ENCODE measurements at regions of chr1 and their contacts with region 1.

Region 1: DNA sequence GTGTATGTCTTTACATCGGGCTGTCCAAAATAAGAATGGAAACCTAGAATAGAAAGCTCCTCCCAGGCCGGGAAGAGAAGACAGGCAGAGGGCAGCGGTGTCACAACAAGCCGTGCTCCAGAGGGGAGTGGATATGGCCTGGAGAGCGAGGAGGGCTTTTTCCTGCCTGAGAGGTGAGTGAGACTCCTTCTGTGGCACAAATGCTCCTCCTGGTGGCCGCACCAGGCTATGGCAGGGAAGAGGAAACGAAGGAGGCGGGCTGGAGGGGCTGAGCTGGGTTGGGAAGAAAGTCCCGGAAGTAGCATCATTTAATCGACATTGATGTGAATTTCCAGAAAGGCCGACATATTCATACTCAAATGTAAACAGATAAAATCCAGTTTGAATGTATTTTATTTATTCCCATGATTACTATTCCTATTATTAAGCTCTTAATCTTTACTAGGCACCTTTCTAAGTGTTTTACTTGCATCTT is 54.7 kb downstream of the MEF2D start:
- DNase-seq: peak; percentile 72
- CTCF ChIP-seq: peak; percentile 98

Region 2: GRCh38 chr1:156096640-156097391 is 349.0 kb before region 1 on chr1:
- CTCF ChIA-PET with region 1: interaction called, 10 read pairs
- POLR2A ChIA-PET with region 1: no interaction called
- DNase-seq: peak; percentile 84
- CTCF ChIP-seq: peak; percentile 86

Region 3: DNA sequence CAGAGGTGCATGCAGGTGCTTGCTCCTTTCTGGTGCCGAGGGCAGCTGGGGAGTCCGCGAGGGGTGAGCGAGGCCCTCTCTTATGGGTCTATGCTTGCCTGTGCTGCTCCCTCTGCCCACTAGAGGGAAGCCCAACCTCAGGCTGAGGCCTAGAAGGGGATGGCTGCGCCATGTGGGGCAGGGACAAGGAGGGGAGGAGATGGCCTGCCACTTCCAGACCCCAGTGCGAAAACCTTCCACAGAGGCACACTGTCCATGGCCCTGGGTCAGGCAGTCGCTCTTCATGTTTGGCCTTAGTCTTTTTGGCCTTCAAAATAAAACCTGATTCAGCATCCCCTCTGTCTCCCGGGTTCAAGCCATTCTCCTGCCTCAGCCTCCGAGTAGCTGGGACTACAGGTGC is 62.8 kb before region 1 on chr1:
- CTCF ChIA-PET with region 1: interaction called, 480 read pairs
- POLR2A ChIA-PET with region 1: no interaction called
- DNase-seq: peak; percentile 87
- CTCF ChIP-seq: peak; percentile 97

Region 4: DNA sequence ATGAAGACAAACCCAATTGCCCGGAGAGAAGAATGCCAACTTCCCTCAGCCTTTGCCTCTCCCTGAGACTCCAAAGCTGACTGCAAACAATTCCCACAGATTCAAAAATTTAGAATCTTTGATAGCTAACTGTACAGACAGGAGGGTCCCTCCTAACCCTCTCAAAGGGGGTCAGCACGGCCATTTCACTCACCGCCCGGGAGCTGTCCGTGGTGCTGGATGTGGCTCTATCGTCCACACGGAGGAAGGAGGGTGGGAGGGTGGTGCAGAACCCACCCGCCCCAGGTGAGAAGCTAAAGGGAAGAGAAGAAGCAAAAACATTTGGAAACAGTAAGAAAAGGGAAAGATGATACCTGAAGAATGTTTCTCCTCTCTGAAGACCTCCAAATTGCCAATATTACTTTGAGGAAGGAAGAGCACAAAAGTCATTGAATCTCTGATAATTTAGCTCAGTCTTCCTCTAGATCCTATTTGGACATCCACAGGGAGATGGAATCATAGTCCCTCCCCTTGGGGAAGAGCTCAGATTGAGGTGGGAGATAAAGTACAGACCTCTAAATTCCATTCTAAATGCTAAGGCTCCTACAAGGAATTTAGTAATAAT is 31.3 kb before region 1 on chr1:
- CTCF ChIA-PET with region 1: interaction called, 24 read pairs
- POLR2A ChIA-PET with region 1: no interaction called
- DNase-seq: no peak
- CTCF ChIP-seq: no peak

Region 5: DNA sequence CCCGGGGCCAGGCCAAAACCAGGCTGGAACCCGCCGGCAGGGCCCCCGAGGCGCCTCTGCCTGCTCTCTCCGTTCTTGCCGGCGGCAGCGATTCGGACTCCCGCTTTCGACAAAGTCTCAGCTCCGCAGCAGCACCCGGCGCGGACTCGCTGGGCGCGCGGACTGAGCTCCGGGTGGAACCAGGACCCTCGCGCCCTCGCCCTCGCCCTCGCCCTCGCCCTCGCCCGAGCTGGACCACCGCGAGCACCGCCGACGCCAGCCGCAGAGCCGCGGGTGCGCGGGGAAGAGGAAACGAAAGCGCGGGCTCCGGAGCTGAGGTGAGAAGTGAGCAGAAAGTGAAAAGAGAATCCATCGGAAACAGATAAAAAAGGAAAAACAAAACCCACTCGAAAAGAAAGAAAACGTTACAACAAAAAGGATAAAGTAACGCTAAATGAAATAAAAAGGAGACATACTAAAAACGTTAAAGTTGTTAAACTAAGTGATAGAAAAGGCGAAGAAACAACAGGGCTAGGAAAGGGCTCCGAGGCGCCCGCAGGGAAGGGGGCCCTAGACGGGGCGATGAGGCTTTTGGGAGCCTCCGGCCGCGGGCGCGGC is 10.2 kb before region 1 on chr1:
- CTCF ChIA-PET with region 1: interaction called, 83 read pairs
- POLR2A ChIA-PET with region 1: no interaction called
- DNase-seq: peak; percentile 45
- CTCF ChIP-seq: no peak

Region 6: GRCh38 chr1:156513185-156513584 is 67.4 kb after region 1 on chr1:
- CTCF ChIA-PET with region 1: no interaction called
- POLR2A ChIA-PET with region 1: no interaction called
- DNase-seq: no peak
- CTCF ChIP-seq: no peak

Region 7: DNA sequence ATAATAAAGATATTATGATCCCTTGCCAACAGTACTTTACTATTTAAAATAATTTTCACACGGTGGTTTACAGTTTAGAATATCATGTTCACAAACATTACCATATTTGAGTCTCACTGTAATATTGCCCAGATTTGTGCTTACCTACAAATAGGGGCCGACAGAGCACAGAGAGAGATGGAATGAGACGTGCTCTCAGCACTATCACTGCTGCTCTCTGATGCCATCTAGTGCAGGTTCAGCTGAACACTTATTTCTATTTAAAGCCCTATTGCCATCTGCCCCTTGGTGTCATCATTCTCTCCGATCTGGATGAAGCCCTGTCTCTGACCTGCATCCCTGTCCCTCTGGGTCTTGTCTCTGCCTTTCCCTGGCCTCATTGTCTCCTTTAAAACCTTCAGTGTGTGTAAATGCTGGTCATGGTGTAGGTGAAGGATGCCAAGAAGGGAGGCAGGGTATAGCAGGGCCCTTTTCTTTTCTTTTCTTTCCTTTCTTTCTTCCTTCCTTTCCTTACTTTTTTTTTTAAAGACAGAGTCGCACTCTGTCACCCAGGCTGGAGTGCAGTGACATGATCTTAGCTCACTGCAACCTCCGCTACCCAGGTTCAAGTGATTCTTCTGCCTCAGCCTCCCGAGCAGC is 162.3 kb after region 1 on chr1:
- CTCF ChIA-PET with region 1: interaction called, 10 read pairs
- POLR2A ChIA-PET with region 1: no interaction called
- DNase-seq: peak; percentile 70
- CTCF ChIP-seq: peak; percentile 74

Region 8: DNA sequence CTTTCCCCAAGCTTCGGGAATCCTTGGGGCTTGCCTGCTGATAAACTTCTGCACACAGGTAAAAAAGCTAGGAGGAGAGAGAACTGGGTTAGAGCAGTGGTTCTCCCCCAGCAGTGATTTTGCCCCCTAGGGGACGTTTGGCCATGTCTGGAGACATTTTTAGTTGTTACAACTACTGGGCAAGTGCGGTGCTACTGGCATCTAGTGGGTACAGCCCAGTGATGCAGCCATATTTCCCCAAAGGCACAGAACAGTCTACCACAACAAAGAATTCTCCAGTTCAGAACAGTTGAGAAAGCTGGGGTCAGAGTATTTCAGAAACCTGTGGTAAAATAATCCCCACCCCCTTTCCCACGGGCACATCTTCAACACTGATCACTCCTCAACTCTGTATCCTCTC is 515.9 kb after region 1 on chr1:
- CTCF ChIA-PET with region 1: no interaction called
- POLR2A ChIA-PET with region 1: no interaction called
- DNase-seq: no peak
- CTCF ChIP-seq: peak; percentile 11

Measured in GM10248 (cell line).